Activated naive CD4-positive, alpha-beta T cell treated with anti-CD3 and anti-CD28 coated beads for 36 hours (primary cell): ENCODE measurements at regions of chr17 and their contacts with region 1.

Region 1: DNA sequence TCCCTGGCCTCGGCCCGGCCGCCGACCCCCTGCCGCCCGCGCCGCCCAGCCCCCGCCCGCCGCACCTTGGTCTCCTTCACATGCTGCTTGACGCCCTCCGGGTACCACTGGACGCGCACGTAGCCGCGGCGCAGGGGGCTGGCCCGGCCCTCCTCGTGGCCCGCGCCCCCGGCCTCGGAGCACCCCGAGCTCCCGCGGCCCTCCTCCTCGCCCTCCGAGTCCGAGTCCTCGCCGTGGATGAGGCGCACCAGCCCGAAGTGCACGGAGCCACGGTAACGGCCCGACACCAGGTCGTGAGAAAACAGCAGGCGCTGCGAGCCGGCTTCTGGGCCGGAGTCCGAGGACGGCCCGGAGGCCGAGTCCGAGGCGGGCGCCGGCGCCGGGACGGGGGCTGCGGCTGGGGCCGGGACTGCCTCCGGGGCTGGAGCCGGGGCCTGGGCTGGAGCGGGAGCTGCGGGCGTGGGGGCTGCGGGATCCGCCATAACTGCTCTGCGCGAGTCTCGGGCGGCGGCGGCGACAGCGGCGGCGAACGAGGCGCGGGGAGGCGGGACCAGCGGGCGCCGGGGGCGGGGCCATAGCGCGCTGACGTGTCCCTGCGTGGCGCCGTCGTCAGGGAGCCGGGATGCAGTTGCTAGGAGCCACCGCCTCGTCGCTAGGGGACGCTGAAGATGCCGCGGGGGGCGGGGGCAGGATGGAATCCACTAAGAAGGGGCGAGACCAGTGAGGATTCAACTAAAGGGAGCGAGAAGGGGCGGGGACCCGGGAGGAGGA is at the start of gene UBE2O:
- DNase-seq: peak; percentile 92
- H3K4me3 Mint-ChIP-seq: peak within 1 kb of the TSS; percentile 85
- H3K27ac Mint-ChIP-seq: no peak within 1 kb of the TSS
- H3K4me1 Mint-ChIP-seq: peaks cover 41% of the 10 kb centered on the region
- H3K27me3 Mint-ChIP-seq: no peaks in the 10 kb centered on the region
- total RNA-seq, gene UBE2O: 18.8 TPM

Region 2: GRCh38 chr17:75978938-75979704 is 473.7 kb before region 1 on chr17 and contains the starts of genes ACOX1 and TEN1:
- CTCF ChIA-PET with region 1: interaction called, 3 read pairs
- intact Hi-C with region 1: loop called (anchors 5 kb)
- DNase-seq: peak; percentile 98
- H3K4me3 Mint-ChIP-seq: peak within 1 kb of the TSS; percentile 99
- H3K27ac Mint-ChIP-seq: peak within 1 kb of the TSS; percentile 100
- H3K4me1 Mint-ChIP-seq: peaks cover 30% of the 10 kb centered on the region
- H3K27me3 Mint-ChIP-seq: no peaks in the 10 kb centered on the region
- total RNA-seq, gene ACOX1: 31.4 to 34.9 TPM
- total RNA-seq, gene TEN1: 9.7 to 12.2 TPM

Region 3: GRCh38 chr17:76141212-76142038 is 311.4 kb before region 1 on chr17 and contains the start of gene FOXJ1:
- CTCF ChIA-PET with region 1: no interaction called
- intact Hi-C with region 1: no loop called
- DNase-seq: peak; percentile 92
- H3K4me3 Mint-ChIP-seq: peak within 1 kb of the TSS; percentile 72
- H3K27ac Mint-ChIP-seq: no peak within 1 kb of the TSS
- H3K4me1 Mint-ChIP-seq: peaks cover 58% of the 10 kb centered on the region
- H3K27me3 Mint-ChIP-seq: peaks cover 2% of the 10 kb centered on the region
- total RNA-seq, gene FOXJ1: 0.60 to 0.84 TPM

Region 4: DNA sequence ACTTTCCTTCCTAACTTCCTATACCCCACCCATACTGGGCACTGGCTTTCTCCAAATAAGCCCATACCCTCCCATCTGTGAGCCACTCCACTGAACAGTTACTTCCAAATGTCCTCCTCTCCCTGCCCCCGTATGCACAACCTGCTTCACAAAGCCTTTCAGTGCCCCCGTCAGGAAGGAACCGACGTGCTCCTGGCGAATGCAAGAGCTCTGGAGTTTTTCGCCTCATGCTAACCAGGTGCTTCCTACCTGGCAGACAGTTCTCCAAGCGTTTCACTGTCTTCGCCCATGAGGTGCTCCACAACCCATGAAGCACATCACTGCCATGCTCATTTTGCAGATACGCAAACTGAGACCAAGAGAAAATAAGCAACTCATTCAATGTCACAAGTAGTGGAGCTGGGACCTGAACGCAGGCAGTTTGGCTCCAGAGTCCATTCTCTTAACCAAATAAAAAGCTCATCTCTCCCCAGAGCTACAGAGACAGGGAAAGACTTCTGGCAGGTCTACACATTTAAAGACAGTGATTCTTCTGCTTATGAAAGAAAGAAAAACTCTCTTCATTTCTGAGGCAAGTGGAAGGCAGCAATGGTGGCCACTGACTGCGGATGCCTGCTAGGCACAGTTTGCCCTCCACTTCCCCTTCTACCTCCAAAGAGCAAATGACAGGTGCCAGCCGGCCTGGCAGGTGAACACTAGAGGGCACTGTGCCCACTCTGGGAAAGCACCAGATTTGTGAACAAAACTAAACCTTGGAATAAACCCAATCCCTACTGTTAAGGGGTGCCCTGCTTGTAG is 44.6 kb before region 1 on chr17:
- CTCF ChIA-PET with region 1: interaction called, 6 read pairs
- intact Hi-C with region 1: loop called (anchors 1 kb)
- DNase-seq: peak; percentile 86
- H3K4me3 Mint-ChIP-seq: no peak overlapping the region
- H3K27ac Mint-ChIP-seq: no peak overlapping the region
- H3K4me1 Mint-ChIP-seq: peaks cover 8% of the 10 kb centered on the region
- H3K27me3 Mint-ChIP-seq: no peaks in the 10 kb centered on the region

Region 5: GRCh38 chr17:76501018-76501826 is 48.4 kb after region 1 on chr17 and contains the start of gene RHBDF2:
- CTCF ChIA-PET with region 1: interaction called, 14 read pairs
- intact Hi-C with region 1: loop called (anchors 1 kb)
- DNase-seq: peak; percentile 97
- H3K4me3 Mint-ChIP-seq: peak within 1 kb of the TSS; percentile 83
- H3K27ac Mint-ChIP-seq: peak within 1 kb of the TSS; percentile 92
- H3K4me1 Mint-ChIP-seq: peaks cover 30% of the 10 kb centered on the region
- H3K27me3 Mint-ChIP-seq: no peaks in the 10 kb centered on the region
- total RNA-seq, gene RHBDF2: 13.3 to 13.4 TPM

Region 6: DNA sequence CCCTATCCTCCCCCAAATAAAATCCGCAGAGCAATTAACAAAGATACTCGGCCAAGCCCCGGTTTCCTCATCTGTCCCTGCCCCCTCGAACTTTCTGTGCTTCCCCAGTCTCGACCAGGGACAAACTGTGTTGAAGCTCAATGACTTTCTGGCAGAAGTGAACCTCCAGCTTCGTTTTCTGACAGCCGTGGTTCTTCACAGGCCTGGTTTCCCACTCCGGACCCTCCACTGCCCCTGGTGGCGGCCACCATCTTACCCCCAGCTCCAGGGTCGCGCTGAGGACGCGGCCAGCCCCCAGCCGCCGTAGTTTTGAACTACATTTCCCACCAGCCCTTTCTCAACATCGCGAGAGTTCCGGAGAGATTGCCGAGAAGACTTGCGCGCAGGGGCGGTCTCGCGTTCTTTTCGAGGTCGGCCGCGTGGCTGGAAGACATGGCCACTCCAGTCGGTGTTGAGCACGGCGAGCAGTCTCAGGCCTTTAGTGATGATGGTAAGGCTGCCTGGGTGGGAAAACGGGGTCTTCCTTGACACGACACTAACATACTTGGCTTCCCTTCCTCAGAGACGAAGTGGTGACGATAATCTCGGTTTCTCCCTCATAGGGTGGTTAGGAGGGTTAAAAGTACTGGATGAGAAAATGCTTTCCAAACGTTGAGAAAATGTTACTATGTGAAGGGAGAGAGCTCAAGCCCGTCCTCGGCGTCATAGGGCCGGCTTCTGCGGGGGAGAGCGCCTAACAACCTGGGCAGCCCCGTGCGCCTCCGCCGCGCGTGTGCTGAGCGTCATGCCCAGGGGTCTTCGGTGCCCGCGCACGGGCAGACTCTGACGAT is 104.7 kb after region 1 on chr17:
- CTCF ChIA-PET with region 1: no interaction called
- intact Hi-C with region 1: loop called (anchors 5 kb)
- DNase-seq: peak; percentile 97
- H3K4me3 Mint-ChIP-seq: peak overlapping the region; percentile 96
- H3K27ac Mint-ChIP-seq: peak overlapping the region; percentile 96
- H3K4me1 Mint-ChIP-seq: peaks cover 54% of the 10 kb centered on the region
- H3K27me3 Mint-ChIP-seq: no peaks in the 10 kb centered on the region

Region 7: DNA sequence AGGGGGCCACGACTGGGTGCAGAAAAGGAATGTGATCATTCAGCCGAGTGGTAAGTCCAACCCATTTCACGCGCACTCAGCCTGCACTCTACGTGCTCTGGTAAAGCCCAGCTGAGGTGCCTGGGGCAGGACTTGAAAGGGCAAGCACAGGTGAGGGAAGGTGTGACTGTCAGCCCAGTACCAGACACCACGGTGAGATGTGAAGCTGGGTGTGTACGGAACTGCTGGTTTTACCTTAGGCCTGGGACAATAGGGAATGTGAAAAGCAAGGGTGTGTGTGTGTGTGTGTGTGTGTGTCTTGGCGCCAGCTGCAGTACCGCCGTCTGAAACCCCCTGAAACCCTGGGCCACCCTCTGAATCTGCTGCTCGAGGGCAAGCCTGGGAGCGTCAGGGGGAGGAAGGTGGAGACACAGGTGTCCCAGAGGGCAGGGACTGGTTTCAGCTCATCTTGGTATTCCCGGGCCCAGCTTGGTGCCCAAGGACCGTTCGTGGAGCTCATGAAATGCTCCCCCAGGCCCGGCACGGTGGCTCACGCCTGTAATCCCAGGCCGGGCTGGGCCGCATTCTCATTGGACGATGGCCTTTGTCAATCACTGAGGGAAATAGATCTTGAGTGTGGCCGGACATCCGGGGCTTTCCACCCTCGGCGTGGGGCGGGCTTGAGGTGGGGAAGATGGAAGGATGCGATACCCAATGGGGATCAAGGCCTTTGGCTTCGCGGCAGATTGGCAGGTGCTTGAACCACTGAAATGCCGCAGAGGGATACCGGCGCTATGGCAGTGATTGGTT is 218.5 kb after region 1 on chr17:
- CTCF ChIA-PET with region 1: no interaction called
- intact Hi-C with region 1: loop called (anchors 1 kb)
- DNase-seq: peak; percentile 100
- H3K4me3 Mint-ChIP-seq: peak overlapping the region; percentile 93
- H3K27ac Mint-ChIP-seq: peak overlapping the region; percentile 92
- H3K4me1 Mint-ChIP-seq: peaks cover 29% of the 10 kb centered on the region
- H3K27me3 Mint-ChIP-seq: no peaks in the 10 kb centered on the region